Naive thymus-derived CD4-positive, alpha-beta T cell (primary cell): ENCODE measurements at regions of chr7 and their contacts with region 1.

Region 1: DNA sequence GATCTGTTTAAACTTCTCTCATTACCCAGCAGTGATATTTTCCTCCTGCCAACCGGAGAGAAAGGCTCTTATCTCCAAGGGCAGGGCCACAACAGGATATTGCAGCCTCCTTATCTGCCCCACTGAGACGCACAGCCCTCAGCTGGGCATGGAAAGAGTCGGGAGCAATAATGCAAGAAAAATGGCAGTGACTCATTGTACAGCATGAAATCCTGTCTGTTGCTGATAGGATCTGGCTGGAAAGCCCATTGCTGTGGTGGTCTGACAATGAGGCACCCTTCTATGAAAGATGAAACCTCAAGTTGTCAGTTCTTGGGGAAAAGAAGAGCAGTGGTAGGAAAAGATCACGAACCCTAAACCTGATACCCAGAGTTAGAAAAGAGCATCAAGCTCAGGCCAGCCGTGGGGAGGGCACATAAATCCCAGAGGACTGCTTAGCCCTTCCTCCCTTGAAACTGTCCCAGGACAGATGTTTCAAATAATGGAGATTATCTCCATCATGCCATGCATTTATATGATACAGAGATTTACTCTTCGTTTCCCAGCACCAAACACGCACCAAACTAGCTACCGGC is 47.0 kb upstream of the FIGNL1 start:
- DNase-seq: no peak
- ATAC-seq: peak; percentile 37
- H3K4me3 ChIP-seq: no peak overlapping the region
- H3K4me3 Mint-ChIP-seq: no peak overlapping the region
- H3K27ac ChIP-seq: no peak overlapping the region
- H3K27ac Mint-ChIP-seq: no peak overlapping the region
- H3K4me1 ChIP-seq: no peaks in the 10 kb centered on the region
- H3K4me1 Mint-ChIP-seq: no peaks in the 10 kb centered on the region
- H3K27me3 ChIP-seq: no peaks in the 10 kb centered on the region
- H3K27me3 Mint-ChIP-seq: peaks cover 5 to 39% (median 17%) of the 10 kb centered on the region in 5 donors

Region 2: GRCh38 chr7:50449881-50450589 is 47.1 kb before region 1 on chr7 and contains the start of gene FIGNL1:
- CTCF ChIA-PET with region 1: no interaction called
- POLR2A ChIA-PET with region 1: no interaction called
- intact Hi-C with region 1: no loop called
- DNase-seq: peak; percentile 61 to 87 (median 84)
- ATAC-seq: peak; percentile 98
- H3K4me3 ChIP-seq: peak within 1 kb of the TSS; percentile 63
- H3K4me3 Mint-ChIP-seq: peak within 1 kb of the TSS; percentile 91 to 96 (median 94)
- H3K27ac ChIP-seq: peak within 1 kb of the TSS; percentile 94
- H3K27ac Mint-ChIP-seq: peak within 1 kb of the TSS; percentile 92 to 99 (median 96)
- H3K4me1 ChIP-seq: peaks cover 13 to 14% of the 10 kb centered on the region in 2 donors
- H3K4me1 Mint-ChIP-seq: peaks cover 14 to 43% (median 29%) of the 10 kb centered on the region in 7 donors
- H3K27me3 ChIP-seq: no peaks in the 10 kb centered on the region
- H3K27me3 Mint-ChIP-seq: peaks cover 0 to 11% (median 0%) of the 10 kb centered on the region in 5 donors
- total RNA-seq, gene FIGNL1: 7.7 to 30.2 (median 14.3) TPM

Region 3: GRCh38 chr7:50544992-50545391 is 47.8 kb after region 1 on chr7:
- CTCF ChIA-PET with region 1: no interaction called
- POLR2A ChIA-PET with region 1: no interaction called
- intact Hi-C with region 1: loop called in 1 of 2 experiments (anchors 1 kb)
- DNase-seq: no peak
- ATAC-seq: no peak
- H3K4me3 ChIP-seq: no peak overlapping the region
- H3K4me3 Mint-ChIP-seq: no peak overlapping the region
- H3K27ac ChIP-seq: no peak overlapping the region
- H3K27ac Mint-ChIP-seq: no peak overlapping the region
- H3K4me1 ChIP-seq: no peaks in the 10 kb centered on the region
- H3K4me1 Mint-ChIP-seq: no peaks in the 10 kb centered on the region
- H3K27me3 ChIP-seq: no peaks in the 10 kb centered on the region
- H3K27me3 Mint-ChIP-seq: peaks cover 0 to 8% (median 5%) of the 10 kb centered on the region in 5 donors